GM12878 (cell line): ENCODE measurements at regions of chr2 and their contacts with region 1.

Region 1: GRCh38 chr2:74391580-74392448 is 11.7 kb upstream of the DCTN1 start:
- DNase-seq: peak; percentile 76
- ATAC-seq: peak; percentile 89
- H3K4me3 ChIP-seq: peak overlapping the region; percentile 88
- H3K27ac ChIP-seq: peak overlapping the region; percentile 98
- H3K4me1 ChIP-seq: peaks cover 3% of the 10 kb centered on the region; the same call in 1 of the 2 replicates
- H3K27me3 ChIP-seq: no peaks in the 10 kb centered on the region
- CTCF ChIP-seq: peak; percentile 97 to 99 (median 98); a peak in 5 of 6 replicates
- EP300 ChIP-seq: no peak
- POLR2A ChIP-seq: peak; percentile 83
- RAD21 ChIP-seq: peak; percentile 59

Region 2: DNA sequence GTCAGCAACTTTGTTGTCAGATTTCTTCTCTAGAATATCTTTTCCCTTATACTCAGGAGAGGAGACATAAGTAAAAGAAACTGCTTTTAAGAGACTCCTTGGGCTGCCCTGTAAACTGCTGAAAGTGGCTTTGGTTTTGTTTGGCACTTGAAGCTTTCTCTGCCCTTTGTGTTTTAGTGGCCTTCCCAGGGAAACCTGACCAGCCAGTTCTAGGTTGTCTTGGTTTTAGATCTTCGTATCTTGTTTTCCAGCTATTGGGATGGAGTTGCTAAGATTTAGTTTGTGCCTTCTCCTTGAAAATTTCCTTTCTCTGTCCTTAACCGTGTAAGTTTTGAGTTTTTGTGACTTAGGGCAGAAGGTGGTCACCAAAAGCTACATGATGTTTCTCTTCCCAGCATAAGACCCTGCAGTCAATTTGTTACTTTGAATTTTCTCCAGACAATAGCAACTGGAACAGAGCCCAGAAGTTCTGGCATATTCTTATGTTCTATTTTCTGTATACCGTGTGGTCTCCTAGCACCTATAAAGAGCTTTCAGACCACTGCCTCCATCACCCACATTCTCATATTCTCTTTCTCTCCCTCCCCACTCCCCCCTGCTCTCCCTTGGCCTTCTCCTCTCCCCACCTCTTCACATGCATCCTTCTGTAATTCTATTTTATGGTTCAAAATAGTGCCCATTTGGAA is 325.2 kb before region 1 on chr2:
- CTCF ChIA-PET with region 1: no interaction called
- POLR2A ChIA-PET with region 1: no interaction called
- RAD21 ChIA-PET with region 1: no interaction called
- SMC1A ChIA-PET with region 1: no interaction called
- in situ Hi-C with region 1: no loop called
- intact Hi-C with region 1: no loop called
- DNase-seq: no peak
- ATAC-seq: no peak
- H3K4me3 ChIP-seq: no peak overlapping the region
- H3K27ac ChIP-seq: no peak overlapping the region
- H3K4me1 ChIP-seq: no peaks in the 10 kb centered on the region
- H3K27me3 ChIP-seq: no peaks in the 10 kb centered on the region
- CTCF ChIP-seq: no peak
- EP300 ChIP-seq: no peak
- POLR2A ChIP-seq: no peak
- RAD21 ChIP-seq: no peak

Region 3: DNA sequence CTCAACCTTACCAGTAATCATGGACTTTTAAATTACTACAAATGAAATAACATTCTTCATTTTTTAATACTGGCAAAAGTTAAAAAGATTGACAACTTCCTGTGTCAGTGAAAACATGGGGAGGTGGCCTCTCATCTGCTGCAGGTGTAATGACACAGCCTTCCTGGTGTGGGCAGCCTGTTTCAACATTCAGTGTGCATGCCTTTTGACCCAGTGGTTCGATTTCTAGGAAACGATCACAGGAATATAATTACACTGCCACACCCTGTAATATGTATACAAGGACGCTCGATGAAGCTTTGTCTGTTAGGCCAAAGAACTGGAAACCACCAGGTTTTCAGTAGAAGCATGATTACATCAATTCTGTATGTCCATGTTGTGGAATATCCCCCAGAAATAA is 124.7 kb before region 1 on chr2:
- CTCF ChIA-PET with region 1: interaction called, 5 read pairs
- POLR2A ChIA-PET with region 1: no interaction called
- RAD21 ChIA-PET with region 1: no interaction called
- SMC1A ChIA-PET with region 1: no interaction called
- in situ Hi-C with region 1: no loop called
- intact Hi-C with region 1: loop called (anchors 5 kb)
- DNase-seq: no peak
- ATAC-seq: peak; percentile 96
- H3K4me3 ChIP-seq: no peak overlapping the region
- H3K27ac ChIP-seq: no peak overlapping the region
- H3K4me1 ChIP-seq: no peaks in the 10 kb centered on the region
- H3K27me3 ChIP-seq: no peaks in the 10 kb centered on the region
- CTCF ChIP-seq: peak; percentile 54 to 75 (median 62)
- EP300 ChIP-seq: no peak
- POLR2A ChIP-seq: no peak
- RAD21 ChIP-seq: peak; percentile 70

Region 4: GRCh38 chr2:74328074-74328473 is 63.7 kb before region 1 on chr2:
- CTCF ChIA-PET with region 1: interaction called, 10 read pairs
- POLR2A ChIA-PET with region 1: no interaction called
- RAD21 ChIA-PET with region 1: no interaction called
- SMC1A ChIA-PET with region 1: interaction called, 36 read pairs
- in situ Hi-C with region 1: no loop called
- intact Hi-C with region 1: no loop called
- DNase-seq: no peak
- ATAC-seq: no peak
- H3K4me3 ChIP-seq: no peak overlapping the region
- H3K27ac ChIP-seq: no peak overlapping the region
- H3K4me1 ChIP-seq: no peaks in the 10 kb centered on the region
- H3K27me3 ChIP-seq: no peaks in the 10 kb centered on the region
- CTCF ChIP-seq: no peak
- EP300 ChIP-seq: no peak
- POLR2A ChIP-seq: no peak
- RAD21 ChIP-seq: no peak

Region 5: GRCh38 chr2:74379851-74380789 is 11.7 kb before region 1 on chr2 and contains the start of gene DCTN1:
- CTCF ChIA-PET with region 1: interaction called, 16 read pairs
- POLR2A ChIA-PET with region 1: interaction called, 4 read pairs
- RAD21 ChIA-PET with region 1: interaction called, 9 read pairs
- SMC1A ChIA-PET with region 1: interaction called, 10 read pairs
- in situ Hi-C with region 1: no loop called
- intact Hi-C with region 1: no loop called
- DNase-seq: no peak
- ATAC-seq: peak; percentile 83
- H3K4me3 ChIP-seq: no peak within 1 kb of the TSS
- H3K27ac ChIP-seq: no peak within 1 kb of the TSS
- H3K4me1 ChIP-seq: no peaks in the 10 kb centered on the region; the same call in 1 of the 2 replicates
- H3K27me3 ChIP-seq: no peaks in the 10 kb centered on the region
- CTCF ChIP-seq: no peak
- EP300 ChIP-seq: no peak
- POLR2A ChIP-seq: no peak
- RAD21 ChIP-seq: no peak
- polyA plus RNA-seq, gene DCTN1: 44.1 to 55.6 TPM

Region 6: DNA sequence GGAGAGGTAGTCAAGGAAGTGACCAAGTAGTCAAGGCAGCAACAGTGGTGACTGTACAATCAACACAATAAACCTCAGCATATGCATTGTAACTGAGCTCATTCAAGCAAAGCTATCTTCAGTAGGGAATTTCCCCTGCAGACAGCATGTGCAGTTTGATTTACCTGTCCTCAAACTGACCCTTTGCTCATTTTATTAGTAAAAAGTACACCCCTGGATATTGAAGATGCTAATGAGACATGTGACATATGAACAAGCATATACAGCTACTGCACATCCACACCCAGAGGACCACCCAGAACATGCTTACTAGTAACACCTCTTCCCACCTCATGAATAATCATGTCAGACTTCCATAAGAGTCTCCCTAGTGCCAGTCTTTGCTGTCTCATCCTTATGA is 14.2 kb after region 1 on chr2:
- CTCF ChIA-PET with region 1: interaction called, 37 read pairs
- POLR2A ChIA-PET with region 1: interaction called, 3 read pairs
- RAD21 ChIA-PET with region 1: interaction called, 13 read pairs
- SMC1A ChIA-PET with region 1: interaction called, 16 read pairs
- in situ Hi-C with region 1: no loop called
- intact Hi-C with region 1: no loop called
- DNase-seq: peak; percentile 37
- ATAC-seq: peak; percentile 99
- H3K4me3 ChIP-seq: no peak overlapping the region
- H3K27ac ChIP-seq: no peak overlapping the region
- H3K4me1 ChIP-seq: peaks cover 5% of the 10 kb centered on the region; the same call in 1 of the 2 replicates
- H3K27me3 ChIP-seq: no peaks in the 10 kb centered on the region
- CTCF ChIP-seq: no peak
- EP300 ChIP-seq: no peak
- POLR2A ChIP-seq: no peak
- RAD21 ChIP-seq: no peak

Region 7: DNA sequence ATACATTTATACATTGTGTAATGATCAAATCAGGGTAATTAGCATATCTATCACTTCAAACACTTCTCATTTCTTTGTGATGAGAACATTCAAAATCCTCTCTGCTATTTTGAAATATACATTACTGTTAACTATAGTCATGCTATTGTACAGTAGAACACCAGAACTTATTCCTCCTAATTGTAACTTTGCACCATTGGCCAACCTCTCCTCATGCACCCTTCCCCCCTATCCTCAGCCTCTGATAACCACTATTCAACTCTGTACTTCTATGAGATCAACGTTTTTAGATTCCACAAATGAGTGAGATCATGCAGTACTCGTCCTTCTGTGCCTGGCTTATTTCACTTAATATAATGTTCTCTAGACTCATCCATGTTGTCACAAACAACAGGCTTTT is 217.2 kb after region 1 on chr2:
- CTCF ChIA-PET with region 1: no interaction called
- POLR2A ChIA-PET with region 1: no interaction called
- RAD21 ChIA-PET with region 1: no interaction called
- SMC1A ChIA-PET with region 1: no interaction called
- in situ Hi-C with region 1: no loop called
- intact Hi-C with region 1: no loop called
- DNase-seq: no peak
- ATAC-seq: no peak
- H3K4me3 ChIP-seq: no peak overlapping the region
- H3K27ac ChIP-seq: no peak overlapping the region
- H3K4me1 ChIP-seq: no peaks in the 10 kb centered on the region
- H3K27me3 ChIP-seq: no peaks in the 10 kb centered on the region; a peak in 1 of 4 replicates
- CTCF ChIP-seq: no peak
- EP300 ChIP-seq: no peak
- POLR2A ChIP-seq: no peak
- RAD21 ChIP-seq: no peak